ENCODE measurements at regions of chr1 and their contacts with region 1.

Region 1: DNA sequence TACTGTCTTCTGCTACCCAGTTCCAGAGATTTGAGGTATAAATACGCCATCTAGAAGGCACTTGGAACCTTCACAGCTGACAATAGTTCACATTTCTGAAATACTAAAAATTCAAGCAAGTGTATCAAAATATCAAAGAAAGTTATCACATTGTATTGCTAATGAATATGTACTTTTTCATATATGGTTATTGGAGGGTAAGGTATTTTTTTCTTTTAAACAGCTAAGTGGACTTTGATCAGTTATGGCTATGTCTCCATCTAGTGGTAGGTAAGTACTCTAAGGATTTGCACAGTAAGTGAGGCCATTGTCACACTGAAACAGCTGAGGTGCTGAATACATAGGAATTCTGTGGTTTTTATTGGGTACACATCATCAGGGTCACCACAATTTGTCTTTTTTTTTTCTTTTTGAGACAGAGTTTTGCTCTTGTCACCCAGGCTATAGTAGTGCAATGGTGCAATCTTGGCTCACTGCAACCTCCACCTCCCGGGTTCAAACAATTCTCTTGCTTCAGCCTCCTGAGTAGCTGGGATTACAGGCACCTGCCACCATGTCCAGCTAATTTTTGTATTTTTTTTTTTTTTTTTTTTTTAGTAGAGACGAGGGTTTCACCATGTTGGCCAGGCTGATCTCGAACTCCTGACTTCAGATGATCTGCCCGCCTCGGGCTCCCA is 49.1 kb upstream of the CR2 start:
- DNase-seq: peak; percentile 52
- H3K4me3 ChIP-seq: no peak overlapping the region
- H3K27ac ChIP-seq: no peak overlapping the region
- H3K4me1 ChIP-seq: no peaks in the 10 kb centered on the region
- H3K27me3 ChIP-seq: no peaks in the 10 kb centered on the region
- CTCF ChIP-seq: peak; percentile 71 to 76

Region 2: GRCh38 chr1:207077470-207078377 is 327.3 kb before region 1 on chr1:
- CTCF ChIA-PET with region 1: no interaction called
- dilution Hi-C with region 1: loop called (anchors 5 kb)
- in situ Hi-C with region 1: loop called in 1 of 2 experiments (anchors 10 kb)
- intact Hi-C with region 1: no loop called
- DNase-seq: peak; percentile 75
- H3K4me3 ChIP-seq: no peak overlapping the region
- H3K27ac ChIP-seq: no peak overlapping the region
- H3K4me1 ChIP-seq: peaks cover 44% of the 10 kb centered on the region
- H3K27me3 ChIP-seq: no peaks in the 10 kb centered on the region
- CTCF ChIP-seq: peak; percentile 91 to 94

Region 3: DNA sequence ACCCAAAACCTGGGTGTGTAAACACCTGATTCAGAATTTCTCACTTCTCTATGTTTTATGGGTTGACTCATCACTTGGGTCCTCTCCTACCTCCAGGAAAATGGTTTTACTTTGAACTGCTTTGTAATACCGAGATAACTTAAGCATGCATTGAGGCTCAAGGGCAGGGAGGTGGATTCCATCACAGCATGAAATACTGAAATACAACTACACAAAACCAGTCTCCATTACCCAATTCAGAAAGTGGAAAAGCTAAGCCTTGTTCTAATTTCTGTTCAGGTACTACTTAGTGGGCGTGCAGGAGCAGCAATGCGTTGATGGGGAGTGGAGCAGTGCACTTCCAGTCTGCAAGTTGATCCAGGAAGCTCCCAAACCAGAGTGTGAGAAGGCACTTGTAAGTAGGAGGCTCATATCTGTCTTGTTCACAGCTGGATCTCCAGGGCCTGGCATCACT is 307.1 kb before region 1 on chr1:
- CTCF ChIA-PET with region 1: no interaction called
- dilution Hi-C with region 1: no loop called
- in situ Hi-C with region 1: loop called in 1 of 2 experiments (anchors 10 kb)
- intact Hi-C with region 1: no loop called
- DNase-seq: peak; percentile 17
- H3K4me3 ChIP-seq: no peak overlapping the region
- H3K27ac ChIP-seq: no peak overlapping the region
- H3K4me1 ChIP-seq: no peaks in the 10 kb centered on the region
- H3K27me3 ChIP-seq: peaks cover 7% of the 10 kb centered on the region
- CTCF ChIP-seq: no peak

Region 4: DNA sequence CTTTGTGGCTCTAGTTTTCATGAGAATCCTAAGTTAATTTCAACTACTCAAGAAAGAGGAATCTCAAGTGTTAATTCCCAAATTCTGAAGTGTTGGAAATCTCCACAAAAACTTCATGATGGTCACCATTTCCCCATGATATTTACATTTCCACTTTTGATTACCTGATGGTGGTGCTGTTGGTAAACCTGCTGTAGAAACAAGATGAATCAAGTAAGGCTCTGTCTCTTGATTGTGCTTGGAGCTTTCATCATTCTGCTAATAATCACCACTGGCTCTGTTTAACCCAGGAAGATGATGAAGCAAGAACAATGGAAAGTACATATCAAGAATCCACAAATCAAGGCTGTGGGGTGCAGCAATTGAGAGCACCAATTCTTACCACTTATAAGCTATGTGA is 223.1 kb before region 1 on chr1:
- CTCF ChIA-PET with region 1: interaction called, 11 read pairs
- dilution Hi-C with region 1: no loop called
- in situ Hi-C with region 1: loop called (anchors 5 to 10 kb)
- intact Hi-C with region 1: loop called (anchors 1 kb)
- DNase-seq: peak; percentile 44
- H3K4me3 ChIP-seq: no peak overlapping the region
- H3K27ac ChIP-seq: no peak overlapping the region
- H3K4me1 ChIP-seq: no peaks in the 10 kb centered on the region
- H3K27me3 ChIP-seq: peaks cover 4% of the 10 kb centered on the region
- CTCF ChIP-seq: peak; percentile 41 to 71

Region 5: GRCh38 chr1:207321079-207321789 is 83.8 kb before region 1 on chr1 and contains the start of gene CD55:
- CTCF ChIA-PET with region 1: interaction called, 7 read pairs
- dilution Hi-C with region 1: no loop called
- in situ Hi-C with region 1: no loop called
- intact Hi-C with region 1: loop called (anchors 2 kb)
- DNase-seq: peak; percentile 100
- H3K4me3 ChIP-seq: peak within 1 kb of the TSS; percentile 76 to 91 (median 78)
- H3K27ac ChIP-seq: peak within 1 kb of the TSS; percentile 94
- H3K4me1 ChIP-seq: peaks cover 18% of the 10 kb centered on the region
- H3K27me3 ChIP-seq: no peaks in the 10 kb centered on the region
- CTCF ChIP-seq: peak; percentile 6 to 28
- total RNA-seq, gene CD55: 35.2 to 40.5 TPM

Region 6: GRCh38 chr1:207486198-207486597 is 81.2 kb after region 1 on chr1:
- CTCF ChIA-PET with region 1: no interaction called
- dilution Hi-C with region 1: no loop called
- in situ Hi-C with region 1: no loop called
- intact Hi-C with region 1: no loop called
- DNase-seq: no peak
- H3K4me3 ChIP-seq: no peak overlapping the region
- H3K27ac ChIP-seq: no peak overlapping the region
- H3K4me1 ChIP-seq: no peaks in the 10 kb centered on the region
- H3K27me3 ChIP-seq: peaks cover 6% of the 10 kb centered on the region
- CTCF ChIP-seq: no peak

Region 7: DNA sequence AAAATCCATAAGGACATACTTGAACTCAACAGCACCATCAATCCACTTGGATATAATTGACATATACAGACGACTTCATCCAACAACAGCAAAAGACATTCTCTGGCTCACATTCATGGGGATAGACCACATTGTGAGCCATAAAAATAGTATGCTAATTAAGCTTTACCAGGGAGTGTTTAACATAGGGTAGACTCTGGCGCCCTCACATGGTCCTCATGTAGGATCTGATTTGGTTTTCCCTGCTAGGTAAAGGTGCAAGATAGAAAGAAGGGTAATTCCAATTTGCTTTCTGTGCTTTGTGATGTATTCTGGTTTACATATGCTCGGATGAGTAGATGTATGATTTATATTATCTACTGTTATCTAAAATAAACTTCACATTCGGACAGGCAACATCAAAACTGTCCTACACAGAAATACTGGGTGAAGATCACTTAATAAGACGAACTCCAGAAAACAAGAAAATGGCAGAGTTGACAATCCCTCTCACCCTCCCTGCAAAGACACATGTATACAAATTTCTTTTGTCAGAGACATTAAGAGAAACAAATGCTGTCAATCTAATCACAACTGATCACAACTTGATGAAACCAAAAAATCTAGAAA is 267.6 kb after region 1 on chr1:
- CTCF ChIA-PET with region 1: no interaction called
- dilution Hi-C with region 1: no loop called
- in situ Hi-C with region 1: no loop called
- intact Hi-C with region 1: loop called (anchors 5 kb)
- DNase-seq: peak; percentile 31
- H3K4me3 ChIP-seq: no peak overlapping the region
- H3K27ac ChIP-seq: no peak overlapping the region
- H3K4me1 ChIP-seq: peaks cover 14% of the 10 kb centered on the region
- H3K27me3 ChIP-seq: peaks cover 15% of the 10 kb centered on the region
- CTCF ChIP-seq: peak; percentile 41 to 60

Measured in mammary epithelial cell (primary cell).